ENCODE measurements at regions of chr1 and their contacts with region 1.

Region 1: GRCh38 chr1:10209905-10210810 is at the start of gene KIF1B:
- DNase-seq: peak; percentile 76
- H3K4me3 ChIP-seq: peak within 1 kb of the TSS; percentile 97
- CTCF ChIP-seq: peak; percentile 95

Region 2: GRCh38 chr1:9676815-9677393 is 533.3 kb before region 1 on chr1:
- CTCF ChIA-PET with region 1: no interaction called
- POLR2A ChIA-PET with region 1: no interaction called
- DNase-seq: no peak
- H3K4me3 ChIP-seq: no peak overlapping the region
- CTCF ChIP-seq: no peak

Region 3: GRCh38 chr1:9852410-9853248 is 357.5 kb before region 1 on chr1:
- CTCF ChIA-PET with region 1: no interaction called
- POLR2A ChIA-PET with region 1: no interaction called
- DNase-seq: no peak
- H3K4me3 ChIP-seq: no peak overlapping the region
- CTCF ChIP-seq: no peak

Region 4: DNA sequence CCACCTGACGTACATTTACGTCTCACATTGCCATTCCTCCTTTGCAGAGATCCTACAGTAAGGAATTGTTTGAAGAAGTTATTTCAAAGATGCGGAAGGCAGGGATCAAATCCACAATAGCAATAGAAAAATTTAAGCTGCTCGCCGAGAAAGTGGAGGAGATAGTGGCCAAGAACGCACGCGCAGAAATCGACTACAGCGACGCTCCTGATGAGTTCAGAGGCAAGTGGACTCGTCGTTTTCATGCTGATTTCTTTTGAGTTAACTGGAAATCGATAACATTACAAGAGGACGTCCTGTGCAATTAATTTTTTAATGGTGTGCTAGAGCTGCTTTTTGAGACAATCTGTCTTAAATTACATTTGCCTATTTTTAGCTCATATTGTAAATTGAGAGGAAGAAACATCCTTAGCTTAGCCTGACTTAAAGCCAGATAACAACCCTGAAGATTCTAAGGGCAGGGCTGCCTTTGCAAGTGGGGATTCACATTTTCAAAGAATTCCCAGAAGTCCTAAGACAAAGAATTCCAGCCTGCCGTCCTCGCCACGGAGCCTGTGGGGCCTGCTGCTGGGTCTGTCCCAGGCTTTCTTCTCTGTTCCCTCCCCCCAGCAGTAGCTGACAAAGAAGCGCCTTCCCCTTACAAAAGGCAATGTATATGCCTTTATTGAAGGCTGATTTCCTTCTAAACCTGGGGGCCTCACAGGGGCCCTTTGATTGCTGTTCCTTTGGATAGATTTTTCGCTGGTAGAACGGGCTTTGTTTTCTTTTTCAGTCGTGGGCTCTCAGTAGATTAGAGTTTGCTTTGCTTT is 31.4 kb before region 1 on chr1:
- CTCF ChIA-PET with region 1: interaction called, 11 read pairs
- POLR2A ChIA-PET with region 1: no interaction called
- DNase-seq: no peak
- H3K4me3 ChIP-seq: no peak overlapping the region
- CTCF ChIP-seq: no peak

Region 5: DNA sequence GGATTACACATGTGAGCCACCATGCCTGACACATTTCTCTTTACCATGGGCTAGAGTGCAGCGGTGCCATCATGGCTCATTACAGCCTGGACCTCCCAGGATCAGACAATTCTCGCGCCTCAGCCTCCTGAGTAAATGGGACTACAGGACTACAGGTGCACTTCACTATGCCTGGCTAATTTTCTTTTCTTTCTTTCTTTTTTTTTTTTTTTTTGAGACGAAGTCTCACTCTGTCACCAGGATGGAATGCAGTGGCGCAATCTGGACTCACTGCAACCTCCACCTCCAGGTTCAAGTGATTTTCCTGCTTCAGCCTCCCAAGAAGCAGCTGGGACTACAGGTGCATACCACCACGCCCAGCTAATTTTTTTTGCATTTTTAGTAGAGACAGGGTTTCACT is 14.6 kb before region 1 on chr1:
- CTCF ChIA-PET with region 1: interaction called, 47 read pairs
- POLR2A ChIA-PET with region 1: interaction called, 5 read pairs
- DNase-seq: no peak
- H3K4me3 ChIP-seq: no peak overlapping the region
- CTCF ChIP-seq: no peak

Region 6: DNA sequence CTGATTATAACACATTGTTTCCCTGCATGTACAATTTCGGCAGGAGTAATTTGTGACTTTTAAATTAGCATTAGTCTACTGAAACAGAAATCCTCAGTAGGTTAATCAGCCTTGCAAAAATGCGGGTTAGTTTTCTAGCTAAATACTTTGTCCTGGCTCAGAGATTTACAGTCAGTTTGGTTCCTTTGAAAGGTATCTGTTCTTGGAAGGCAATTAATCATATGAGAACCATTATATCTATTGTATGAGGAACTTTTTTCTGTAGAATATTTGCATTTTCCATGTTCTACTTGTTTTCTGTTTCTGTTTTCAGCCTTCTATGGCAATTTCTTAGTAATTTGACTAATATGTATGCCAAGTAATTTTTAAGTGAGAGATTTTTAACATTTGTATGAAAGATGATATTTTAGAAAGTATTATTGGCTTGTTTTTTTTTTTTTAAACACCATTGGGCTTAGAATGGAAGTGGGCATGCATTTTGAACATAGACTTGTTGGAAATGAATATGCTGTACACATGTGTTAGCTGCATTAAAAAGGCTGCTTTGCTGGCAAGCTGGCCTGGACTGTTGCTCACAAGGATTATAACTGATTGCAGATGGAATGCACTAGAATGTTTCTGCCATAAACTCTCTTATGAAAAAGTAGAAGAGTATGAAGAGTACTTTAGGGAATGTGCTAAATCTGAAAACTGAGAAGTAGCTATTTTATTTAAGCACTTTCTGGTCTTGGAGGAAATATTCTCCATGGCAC is 26.4 kb after region 1 on chr1:
- CTCF ChIA-PET with region 1: interaction called, 24 read pairs
- POLR2A ChIA-PET with region 1: no interaction called
- DNase-seq: peak; percentile 56
- H3K4me3 ChIP-seq: no peak overlapping the region
- CTCF ChIP-seq: no peak

Region 7: DNA sequence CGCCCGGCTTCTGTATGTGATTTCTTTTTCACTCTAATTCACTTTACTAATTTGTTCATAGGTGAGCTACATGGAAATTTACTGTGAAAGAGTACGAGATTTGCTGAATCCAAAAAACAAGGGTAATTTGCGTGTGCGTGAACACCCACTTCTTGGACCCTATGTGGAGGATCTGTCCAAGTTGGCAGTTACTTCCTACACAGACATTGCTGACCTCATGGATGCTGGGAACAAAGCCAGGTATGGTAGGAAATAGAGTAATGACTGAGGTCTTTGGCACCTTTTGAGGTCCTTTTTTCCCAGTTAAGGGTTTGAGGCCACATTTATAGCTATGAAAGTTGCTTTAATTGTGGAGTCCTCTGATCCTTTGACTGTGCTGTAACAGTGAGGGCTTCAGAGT is 57.2 kb after region 1 on chr1:
- CTCF ChIA-PET with region 1: interaction called, 19 read pairs
- POLR2A ChIA-PET with region 1: no interaction called
- DNase-seq: no peak
- H3K4me3 ChIP-seq: no peak overlapping the region
- CTCF ChIP-seq: no peak

Region 8: DNA sequence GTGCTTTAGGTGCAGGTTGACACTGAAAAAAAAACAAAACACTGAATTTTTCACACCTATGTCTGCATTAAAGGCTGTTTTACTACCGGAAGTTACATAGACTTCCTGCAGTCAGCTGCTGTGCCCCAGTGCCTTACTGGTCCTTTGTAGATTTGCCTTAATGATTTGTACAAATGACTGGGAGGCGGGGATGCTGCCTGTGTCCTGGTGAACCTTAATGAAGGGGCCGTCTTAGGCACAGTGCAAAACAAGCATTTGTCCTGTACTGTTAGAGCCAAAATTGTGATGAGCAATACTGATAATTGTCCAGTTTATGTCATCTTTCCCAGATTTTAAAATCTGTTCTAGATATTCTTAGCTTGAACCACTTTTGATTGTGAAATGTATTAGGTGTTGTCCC is 97.8 kb after region 1 on chr1:
- CTCF ChIA-PET with region 1: interaction called, 21 read pairs
- POLR2A ChIA-PET with region 1: no interaction called
- DNase-seq: no peak
- H3K4me3 ChIP-seq: no peak overlapping the region
- CTCF ChIP-seq: no peak

Region 9: GRCh38 chr1:10430216-10431069 is 220.3 kb after region 1 on chr1 and contains the start of gene CENPS:
- CTCF ChIA-PET with region 1: interaction called, 15 read pairs
- POLR2A ChIA-PET with region 1: interaction called, 3 read pairs
- DNase-seq: no peak
- H3K4me3 ChIP-seq: peak within 1 kb of the TSS; percentile 90
- CTCF ChIP-seq: peak; percentile 91

Region 10: DNA sequence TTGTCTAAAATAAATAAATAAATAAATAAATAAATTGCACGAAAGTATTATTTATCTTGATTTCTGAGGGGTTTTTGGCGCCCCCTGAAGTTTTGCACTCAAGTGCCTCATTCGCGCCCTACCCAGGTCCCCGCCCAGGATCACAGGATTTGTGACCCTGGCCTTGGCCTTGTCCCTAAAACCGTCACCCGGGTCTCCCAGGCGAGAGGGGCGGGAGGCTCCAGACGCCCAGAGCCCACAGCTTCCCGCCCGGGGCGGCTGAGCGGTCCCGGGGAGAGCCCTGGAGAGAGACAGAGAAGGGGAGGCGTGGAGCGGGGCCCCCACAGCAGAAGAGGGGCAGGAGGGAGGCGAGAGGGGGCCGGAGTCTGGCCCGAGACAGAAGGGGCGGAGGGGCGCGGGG is 678.1 kb after region 1 on chr1:
- CTCF ChIA-PET with region 1: no interaction called
- POLR2A ChIA-PET with region 1: no interaction called
- DNase-seq: no peak
- H3K4me3 ChIP-seq: no peak overlapping the region
- CTCF ChIP-seq: no peak

Region 11: DNA sequence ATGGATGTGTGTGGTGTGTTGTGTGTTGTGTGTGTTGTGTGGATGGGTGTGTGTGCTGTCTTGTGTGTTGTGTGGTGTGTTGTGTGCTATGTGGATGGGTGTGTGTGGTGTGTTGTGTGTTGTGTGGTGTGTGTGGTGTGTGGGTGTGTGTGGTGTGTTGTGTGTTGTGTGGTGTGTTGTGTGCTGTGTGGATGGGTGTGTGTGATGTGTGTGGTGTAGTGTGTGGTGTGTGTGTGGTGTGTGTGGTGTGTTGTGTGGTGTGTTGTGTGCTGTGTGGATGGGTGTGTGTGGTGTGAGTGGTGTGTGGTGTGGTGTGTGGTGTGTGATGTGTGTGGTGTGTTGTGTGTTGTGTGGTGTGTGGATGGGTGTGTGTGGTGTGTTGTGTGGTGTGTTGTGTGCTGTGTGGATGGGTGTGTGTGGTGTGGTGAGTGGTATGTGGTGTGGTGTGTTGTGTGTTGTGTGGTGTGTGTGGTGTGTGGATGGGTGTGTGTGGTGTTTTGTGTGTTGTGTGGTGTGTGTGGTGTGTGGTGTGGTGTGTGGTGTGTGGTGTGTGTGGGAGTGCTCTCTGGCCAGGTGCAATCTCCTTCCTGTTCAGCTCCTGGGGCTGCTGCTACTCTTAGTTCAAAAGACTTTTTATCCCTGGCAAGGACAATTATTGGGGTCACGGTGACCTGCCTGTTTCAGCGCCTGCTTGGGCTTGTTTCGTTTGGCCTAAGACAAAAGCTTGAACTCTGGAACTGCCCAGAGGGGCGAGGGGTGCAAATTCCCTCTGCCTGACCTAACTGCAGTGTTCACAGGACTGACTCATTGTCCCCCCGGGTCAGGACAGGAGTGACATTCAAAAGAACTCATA is 1164.0 kb after region 1 on chr1:
- CTCF ChIA-PET with region 1: no interaction called
- POLR2A ChIA-PET with region 1: no interaction called
- DNase-seq: no peak
- H3K4me3 ChIP-seq: no peak overlapping the region
- CTCF ChIP-seq: no peak

Measured in AG04449 (cell line).